ENCODE measurements at regions of chr17 and their contacts with region 1.

Region 1: DNA sequence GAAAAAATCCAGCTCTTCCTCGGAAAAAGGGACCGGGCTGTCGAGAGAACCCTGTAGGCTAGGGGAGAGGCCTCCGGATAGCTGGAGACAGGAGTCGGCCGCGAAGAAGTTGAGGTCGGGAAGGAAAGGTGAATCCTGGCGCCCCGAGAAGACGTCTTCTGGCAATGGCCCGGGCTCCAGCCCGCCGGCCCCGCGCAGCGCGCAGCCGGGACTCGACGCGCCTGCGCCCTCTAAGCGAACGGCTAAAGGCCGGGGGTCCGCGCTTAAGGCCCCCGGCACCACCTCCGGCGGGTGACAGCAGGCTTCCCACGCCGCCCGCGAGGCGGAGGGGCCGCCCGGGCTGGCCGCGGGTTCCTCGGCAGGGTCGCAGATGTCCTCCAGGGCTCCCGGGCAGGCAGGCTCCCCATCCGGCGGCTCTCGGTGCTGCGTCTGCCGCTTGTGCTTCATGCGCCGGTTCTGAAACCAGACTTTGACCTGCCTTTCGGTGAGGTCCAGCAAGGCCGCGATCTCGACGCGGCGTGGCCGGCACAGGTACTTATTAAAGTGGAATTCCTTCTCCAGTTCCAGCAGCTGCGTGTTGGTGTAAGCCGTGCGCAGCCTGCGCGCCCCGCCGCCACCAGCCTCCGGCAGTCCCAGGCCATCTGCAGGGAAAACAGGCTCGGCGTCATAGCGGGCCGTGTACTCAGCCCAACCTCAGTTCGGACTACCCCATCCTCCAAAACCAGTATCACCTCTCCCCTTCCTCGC is 1.6 kb downstream of the HOXB2 start:
- DNase-seq: peak; percentile 70
- H3K4me3 ChIP-seq: peak overlapping the region; percentile 64 to 85 (median 78)
- H3K27ac ChIP-seq: peak overlapping the region; percentile 86
- H3K4me1 ChIP-seq: peaks cover 29% of the 10 kb centered on the region
- H3K27me3 ChIP-seq: no peaks in the 10 kb centered on the region
- CTCF ChIP-seq: peak in 1 of 2 donors; percentile 28

Region 2: DNA sequence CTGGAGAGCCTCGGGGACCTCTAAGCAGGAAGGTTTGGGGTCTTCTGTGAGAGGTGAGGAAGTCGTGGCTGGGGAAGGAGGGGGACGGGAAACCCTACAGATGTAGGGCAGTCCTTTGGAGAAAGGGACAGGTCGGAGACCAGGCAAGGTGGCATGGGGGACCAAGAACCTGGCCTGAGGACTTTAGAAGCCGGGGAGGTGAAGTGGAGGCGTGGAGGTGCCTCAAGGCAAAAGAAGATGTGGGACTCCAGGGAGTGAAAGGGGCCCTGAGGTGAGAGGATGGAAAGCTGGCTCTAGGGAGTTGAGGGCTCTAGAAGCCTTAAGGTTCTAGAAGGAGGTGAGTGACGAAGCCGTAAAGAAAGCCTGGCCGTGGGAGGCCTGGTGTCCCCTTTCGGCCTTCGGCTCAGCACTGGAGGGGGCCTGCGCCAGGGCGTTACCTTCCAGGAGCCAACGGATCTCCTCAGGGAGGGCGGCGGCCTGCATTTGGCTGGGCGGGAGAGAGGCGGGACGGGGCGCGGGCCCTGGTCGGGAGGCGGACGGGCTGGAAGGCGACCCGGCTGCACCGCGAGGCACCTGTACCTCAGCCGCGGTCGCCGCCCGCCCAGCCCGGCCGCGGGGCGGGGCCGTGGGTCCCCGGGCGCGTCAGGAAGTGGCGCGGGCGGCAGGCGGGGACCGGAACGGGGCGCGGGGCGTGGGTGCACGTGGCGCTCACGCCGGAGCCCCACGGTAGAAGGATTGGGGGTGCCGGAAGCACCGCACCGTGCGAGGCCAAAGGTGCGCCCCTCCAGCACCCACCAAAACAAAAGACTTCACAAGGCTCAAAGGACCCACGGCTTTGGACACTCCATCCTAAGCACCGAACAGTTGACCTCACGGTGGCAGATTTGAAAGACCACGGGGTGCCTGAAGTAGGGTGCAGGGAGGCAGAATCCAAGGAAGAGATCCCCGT is 113.4 kb before region 1 on chr17 and contains the start of gene SKAP1:
- CTCF ChIA-PET with region 1: no interaction called
- dilution Hi-C with region 1: no loop called
- in situ Hi-C with region 1: no loop called
- intact Hi-C with region 1: no loop called
- DNase-seq: no peak
- H3K4me3 ChIP-seq: peak within 1 kb of the TSS in 1 of 3 experiments; percentile 22
- H3K27ac ChIP-seq: no peak within 1 kb of the TSS
- H3K4me1 ChIP-seq: peaks cover 6% of the 10 kb centered on the region
- H3K27me3 ChIP-seq: peaks cover 3% of the 10 kb centered on the region
- CTCF ChIP-seq: no peak
- total RNA-seq, gene SKAP1: not detected

Region 3: DNA sequence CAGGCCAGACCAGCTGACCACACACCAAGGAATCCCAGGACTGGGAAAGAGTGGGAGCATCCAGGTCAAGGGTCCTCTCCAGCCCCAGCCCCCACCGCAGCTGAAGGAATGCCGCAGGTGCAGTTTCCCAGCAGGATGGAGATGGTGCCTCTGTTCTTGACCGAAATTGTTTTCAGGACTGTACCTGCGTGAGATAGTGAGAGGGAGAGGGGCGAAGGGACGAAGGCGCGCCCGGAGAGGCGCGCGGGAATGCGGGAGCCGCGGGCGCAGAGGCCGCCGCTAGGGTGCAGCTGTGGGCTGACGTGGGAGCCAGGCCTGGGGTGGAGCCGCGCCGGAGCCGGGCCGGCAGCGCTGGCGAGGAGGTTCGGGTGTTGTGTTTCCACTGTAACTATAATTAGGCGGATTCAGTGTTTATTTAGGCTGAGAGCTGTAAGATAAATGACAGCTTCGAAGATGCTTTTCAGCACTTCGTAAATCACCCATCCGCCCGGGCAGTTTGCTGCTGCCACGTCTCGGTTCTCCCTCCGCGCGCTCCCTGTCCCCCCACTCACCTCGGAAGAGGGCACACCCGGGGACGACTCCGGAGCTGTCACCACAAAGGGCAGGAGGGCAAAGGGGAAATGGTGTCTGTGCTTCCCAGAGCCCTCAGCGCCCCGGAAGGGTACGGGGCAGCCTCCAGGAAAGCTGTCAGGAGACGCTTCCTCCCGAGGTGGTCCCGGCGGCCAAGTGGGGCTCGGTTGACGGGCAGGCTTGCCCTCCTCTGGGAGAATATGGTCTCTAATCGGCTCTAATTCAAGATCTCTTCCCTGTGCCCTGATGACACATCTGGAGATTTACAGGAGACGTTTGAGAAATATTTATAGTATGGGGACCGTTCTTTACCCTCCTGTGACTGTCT is 50.6 kb before region 1 on chr17:
- CTCF ChIA-PET with region 1: no interaction called
- dilution Hi-C with region 1: no loop called
- in situ Hi-C with region 1: no loop called
- intact Hi-C with region 1: loop called (anchors 2 kb)
- DNase-seq: peak; percentile 56
- H3K4me3 ChIP-seq: peak overlapping the region; percentile 16 to 24 (median 17)
- H3K27ac ChIP-seq: no peak overlapping the region
- H3K4me1 ChIP-seq: peaks cover 18% of the 10 kb centered on the region
- H3K27me3 ChIP-seq: no peaks in the 10 kb centered on the region
- CTCF ChIP-seq: peak; percentile 63 to 87

Region 4: DNA sequence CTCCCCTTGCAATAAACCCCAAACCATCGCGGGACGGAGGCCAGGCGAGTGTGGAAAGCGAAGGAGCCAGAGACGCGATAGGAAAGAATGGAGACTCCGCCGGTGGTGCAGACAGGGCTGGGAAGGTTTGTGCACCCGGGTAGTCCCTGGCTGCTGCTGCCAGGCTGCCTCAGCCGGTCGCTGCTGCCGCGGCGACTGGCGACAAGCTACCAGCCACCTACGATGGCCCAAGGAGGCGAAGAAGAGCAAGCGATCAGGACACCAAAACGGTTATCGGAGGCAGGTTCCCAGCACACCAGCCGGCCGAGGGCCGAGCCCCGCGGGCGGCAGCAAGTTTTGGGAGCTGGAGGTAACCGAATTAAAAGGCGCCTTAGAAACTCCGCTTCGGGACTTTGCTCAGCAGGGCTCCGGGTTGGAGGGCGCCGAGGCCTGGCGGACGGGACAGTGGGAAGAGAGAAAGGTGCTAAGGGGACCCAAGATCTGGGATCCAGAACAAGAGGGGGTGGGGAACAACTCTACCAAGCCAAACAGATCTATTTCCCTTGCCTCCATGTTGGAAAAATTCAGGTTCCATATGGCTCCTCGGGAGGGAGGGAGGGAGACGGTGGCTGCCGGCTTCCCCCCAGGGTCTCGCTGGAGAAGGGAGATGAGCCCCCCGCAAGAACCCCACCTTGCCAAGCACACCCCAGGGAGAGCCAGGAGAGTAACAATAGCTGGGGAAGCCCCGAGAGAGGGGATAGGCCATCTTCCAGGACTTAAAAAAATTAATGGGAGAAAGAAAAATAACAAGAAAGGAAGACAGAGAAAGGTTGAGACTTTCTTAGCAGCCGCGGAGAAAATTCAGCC is 11.4 kb after region 1 on chr17:
- CTCF ChIA-PET with region 1: no interaction called
- dilution Hi-C with region 1: no loop called
- in situ Hi-C with region 1: no loop called
- intact Hi-C with region 1: loop called (anchors 1 kb)
- DNase-seq: peak; percentile 62
- H3K4me3 ChIP-seq: peak overlapping the region; percentile 66 to 81 (median 80)
- H3K27ac ChIP-seq: peak overlapping the region; percentile 77
- H3K4me1 ChIP-seq: peaks cover 24% of the 10 kb centered on the region
- H3K27me3 ChIP-seq: no peaks in the 10 kb centered on the region
- CTCF ChIP-seq: no peak

Region 5: GRCh38 chr17:48871551-48872351 is 328.5 kb after region 1 on chr17:
- CTCF ChIA-PET with region 1: no interaction called
- dilution Hi-C with region 1: no loop called
- in situ Hi-C with region 1: no loop called
- intact Hi-C with region 1: no loop called
- DNase-seq: no peak
- H3K4me3 ChIP-seq: no peak overlapping the region
- H3K27ac ChIP-seq: no peak overlapping the region
- H3K4me1 ChIP-seq: no peaks in the 10 kb centered on the region
- H3K27me3 ChIP-seq: no peaks in the 10 kb centered on the region
- CTCF ChIP-seq: no peak